Endothelial cell of umbilical vein (primary cell): ENCODE measurements at regions of chr19 and their contacts with region 1.

Region 1: DNA sequence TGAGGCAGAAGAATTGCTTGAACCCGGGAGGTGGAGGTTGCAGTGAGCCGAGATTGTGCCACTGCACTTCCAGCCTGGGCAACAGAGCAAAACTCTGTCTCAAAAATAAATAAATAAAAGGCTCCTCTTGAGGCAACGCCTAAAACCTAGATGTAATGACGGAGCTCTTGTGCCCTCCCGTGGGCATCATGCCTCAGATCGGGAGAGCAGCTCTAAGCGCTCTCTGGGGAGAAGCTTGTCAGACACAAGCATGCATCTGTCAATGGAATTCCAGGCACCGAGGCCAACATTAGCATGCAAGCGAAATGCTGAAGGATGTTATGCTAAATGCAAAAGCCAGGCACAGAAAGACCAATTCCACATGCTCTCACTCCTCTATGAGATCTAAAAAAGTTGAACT is 45.6 kb upstream of the MRI1 start:
- DNase-seq: no peak
- H3K4me3 ChIP-seq: no peak overlapping the region
- H3K27ac ChIP-seq: no peak overlapping the region
- H3K4me1 ChIP-seq: no peaks in the 10 kb centered on the region
- H3K27me3 ChIP-seq: no peaks in the 10 kb centered on the region
- CTCF ChIP-seq: peak in 1 of 2 donors; percentile 2
- POLR2A ChIP-seq: no peak

Region 2: DNA sequence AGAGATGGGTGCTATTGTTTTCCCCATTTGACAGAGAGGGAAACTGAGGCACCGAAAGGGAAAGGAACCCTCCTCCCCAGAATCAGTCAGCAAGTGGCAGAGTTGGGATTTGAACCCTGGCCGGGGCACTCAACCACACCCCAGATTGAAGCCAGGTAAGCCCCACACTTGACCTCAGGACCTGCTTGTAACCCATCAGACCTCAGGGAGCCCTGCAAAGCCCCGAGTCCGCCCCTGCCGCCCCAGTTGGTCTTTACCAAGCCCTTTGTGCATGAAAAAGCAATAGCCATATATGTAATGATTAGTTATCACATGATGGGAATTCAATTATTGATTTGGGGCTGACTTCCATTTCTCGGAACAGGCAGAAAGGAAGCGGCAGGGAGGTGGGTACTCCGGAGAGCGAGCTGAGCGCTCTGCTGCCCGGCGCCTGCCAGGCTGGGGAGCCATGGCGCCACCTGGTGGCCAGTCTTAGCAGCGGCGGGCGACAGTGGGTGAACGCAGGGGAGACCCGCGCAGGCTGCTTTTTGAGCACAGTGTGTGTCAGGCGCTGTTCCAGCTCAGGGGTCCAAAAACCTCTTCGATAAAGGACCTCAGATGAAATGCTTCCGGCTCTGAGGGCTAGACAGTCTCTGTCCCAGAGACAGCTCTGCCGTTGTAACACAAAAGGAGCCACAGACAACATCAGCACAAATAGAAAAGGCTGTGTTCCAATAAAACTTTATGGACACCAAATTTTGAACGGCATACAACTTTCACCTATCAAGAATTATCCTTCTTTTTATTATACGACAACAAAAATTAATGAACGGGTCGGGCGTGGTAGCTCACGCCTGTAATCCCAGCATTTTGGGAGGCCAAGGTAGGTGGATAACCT is 129.5 kb before region 1 on chr19:
- CTCF ChIA-PET with region 1: interaction called, 124 read pairs
- POLR2A ChIA-PET with region 1: no interaction called
- dilution Hi-C with region 1: no loop called
- intact Hi-C with region 1: no loop called
- DNase-seq: peak; percentile 55
- H3K4me3 ChIP-seq: no peak overlapping the region
- H3K27ac ChIP-seq: no peak overlapping the region
- H3K4me1 ChIP-seq: no peaks in the 10 kb centered on the region
- H3K27me3 ChIP-seq: no peaks in the 10 kb centered on the region
- CTCF ChIP-seq: peak; percentile 96 to 99
- POLR2A ChIP-seq: no peak

Region 3: GRCh38 chr19:13604902-13605586 is 113.7 kb before region 1 on chr19:
- CTCF ChIA-PET with region 1: interaction called, 124 read pairs
- POLR2A ChIA-PET with region 1: no interaction called
- dilution Hi-C with region 1: no loop called
- intact Hi-C with region 1: no loop called
- DNase-seq: no peak
- H3K4me3 ChIP-seq: no peak overlapping the region
- H3K27ac ChIP-seq: no peak overlapping the region
- H3K4me1 ChIP-seq: no peaks in the 10 kb centered on the region
- H3K27me3 ChIP-seq: no peaks in the 10 kb centered on the region
- CTCF ChIP-seq: no peak
- POLR2A ChIP-seq: no peak

Region 4: DNA sequence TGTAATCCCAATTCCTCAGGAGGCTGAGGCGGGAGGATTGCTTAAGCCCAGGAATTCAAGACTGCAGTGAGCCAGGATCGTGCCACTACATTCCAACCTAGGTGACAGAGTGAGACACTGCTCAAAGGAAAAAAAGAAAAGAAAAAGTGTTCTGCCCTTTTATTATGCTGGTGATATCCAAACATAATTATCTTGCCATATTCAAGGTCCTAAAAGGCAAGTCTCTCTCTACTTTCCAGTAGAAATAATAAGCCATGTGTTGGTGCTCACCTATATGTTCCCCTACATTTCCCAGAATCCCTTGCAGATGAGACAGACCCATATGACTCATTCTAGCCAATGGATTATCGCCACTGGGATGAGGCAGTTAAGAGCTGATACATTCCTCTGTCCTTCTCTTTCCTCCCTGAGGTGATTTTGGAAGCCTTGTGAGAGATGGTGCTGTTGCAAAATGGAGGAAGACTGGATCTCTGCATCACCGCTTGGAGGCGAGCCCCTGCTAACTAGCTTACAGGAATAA is 12.7 kb before region 1 on chr19:
- CTCF ChIA-PET with region 1: interaction called, 15 read pairs
- POLR2A ChIA-PET with region 1: no interaction called
- dilution Hi-C with region 1: no loop called
- intact Hi-C with region 1: no loop called
- DNase-seq: no peak
- H3K4me3 ChIP-seq: no peak overlapping the region
- H3K27ac ChIP-seq: no peak overlapping the region
- H3K4me1 ChIP-seq: no peaks in the 10 kb centered on the region
- H3K27me3 ChIP-seq: peaks cover 0 to 3% of the 10 kb centered on the region in 2 experiments
- CTCF ChIP-seq: no peak
- POLR2A ChIP-seq: no peak

Region 5: GRCh38 chr19:13738073-13738472 is 19.3 kb after region 1 on chr19:
- CTCF ChIA-PET with region 1: interaction called, 11 read pairs
- POLR2A ChIA-PET with region 1: no interaction called
- dilution Hi-C with region 1: no loop called
- intact Hi-C with region 1: no loop called
- DNase-seq: no peak
- H3K4me3 ChIP-seq: no peak overlapping the region
- H3K27ac ChIP-seq: no peak overlapping the region
- H3K4me1 ChIP-seq: peaks cover 8% of the 10 kb centered on the region
- H3K27me3 ChIP-seq: no peaks in the 10 kb centered on the region
- CTCF ChIP-seq: no peak
- POLR2A ChIP-seq: no peak

Region 6: GRCh38 chr19:13784731-13785452 is 66.2 kb after region 1 on chr19:
- CTCF ChIA-PET with region 1: no interaction called
- POLR2A ChIA-PET with region 1: no interaction called
- dilution Hi-C with region 1: no loop called
- intact Hi-C with region 1: no loop called
- DNase-seq: peak; percentile 62
- H3K4me3 ChIP-seq: no peak overlapping the region
- H3K27ac ChIP-seq: no peak overlapping the region
- H3K4me1 ChIP-seq: peaks cover 27% of the 10 kb centered on the region
- H3K27me3 ChIP-seq: no peaks in the 10 kb centered on the region
- CTCF ChIP-seq: peak; percentile 67 to 85
- POLR2A ChIP-seq: no peak

Region 7: GRCh38 chr19:14005349-14006242 is 286.9 kb after region 1 on chr19:
- CTCF ChIA-PET with region 1: no interaction called
- POLR2A ChIA-PET with region 1: no interaction called
- dilution Hi-C with region 1: no loop called
- intact Hi-C with region 1: no loop called
- DNase-seq: peak; percentile 87
- H3K4me3 ChIP-seq: peak overlapping the region; percentile 61 to 73 (median 69)
- H3K27ac ChIP-seq: peak overlapping the region; percentile 91
- H3K4me1 ChIP-seq: peaks cover 20% of the 10 kb centered on the region
- H3K27me3 ChIP-seq: no peaks in the 10 kb centered on the region
- CTCF ChIP-seq: no peak
- POLR2A ChIP-seq: no peak